Natural killer cell (primary cell): ENCODE measurements at regions of chr11 and their contacts with region 1.

Region 1: GRCh38 chr11:33257897-33258630 is 883 bp downstream of the HIPK3 start:
- DNase-seq: peak; percentile 69 to 87
- ATAC-seq: peak; percentile 56 to 74 (median 58)
- H3K4me3 ChIP-seq: peak overlapping the region; percentile 94
- H3K4me3 Mint-ChIP-seq: peak overlapping the region; percentile 95
- H3K27ac ChIP-seq: peak overlapping the region; percentile 99
- H3K27ac Mint-ChIP-seq: peak overlapping the region; percentile 95
- H3K4me1 ChIP-seq: peaks cover 10% of the 10 kb centered on the region
- H3K4me1 Mint-ChIP-seq: peaks cover 41 to 47% of the 10 kb centered on the region in 2 donors
- H3K27me3 ChIP-seq: no peaks in the 10 kb centered on the region
- H3K27me3 Mint-ChIP-seq: no peaks in the 10 kb centered on the region
- CTCF ChIP-seq: no peak

Region 2: DNA sequence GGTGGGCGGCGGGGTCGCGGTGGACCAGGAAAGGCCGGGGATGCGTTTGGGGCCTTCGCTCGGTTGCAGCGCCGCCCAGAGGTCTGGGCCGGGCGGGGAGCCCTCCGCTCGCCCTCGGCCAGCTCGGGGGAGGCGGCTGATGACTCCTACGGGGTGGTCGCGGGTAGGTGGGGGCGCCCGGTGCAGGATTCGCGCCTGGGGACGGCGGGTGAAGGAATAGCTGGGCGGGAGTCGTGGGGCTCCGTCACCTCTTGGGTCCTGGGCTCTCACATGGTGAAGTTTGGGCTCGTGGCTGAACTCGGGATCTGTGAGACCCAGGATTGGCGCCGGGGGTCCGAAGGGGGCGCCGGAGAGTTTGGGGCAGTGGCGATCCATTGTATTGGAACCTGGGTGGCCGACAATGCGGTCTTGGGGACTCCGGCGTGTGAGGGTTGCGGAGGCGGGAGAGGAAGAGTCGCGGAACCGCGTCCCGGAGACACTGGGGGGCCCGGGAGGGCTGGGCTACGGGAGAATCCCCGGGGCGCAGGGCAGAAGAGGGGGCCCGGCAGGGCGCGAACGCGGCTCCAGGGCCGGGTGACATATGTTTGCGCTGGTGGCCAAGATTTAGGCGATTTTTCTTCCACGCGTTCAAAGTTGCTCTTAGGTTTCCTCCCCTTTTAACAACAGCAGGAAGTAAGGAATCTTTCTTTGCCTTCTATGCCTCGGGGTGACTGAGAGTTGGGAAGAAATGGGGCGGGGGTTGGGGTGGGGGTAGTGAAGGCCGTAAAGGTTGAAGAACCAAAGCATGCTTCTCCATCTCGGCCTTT is 364.5 kb before region 1 on chr11:
- intact Hi-C with region 1: loop called (anchors 10 kb)
- DNase-seq: peak; percentile 57 to 70
- ATAC-seq: peak; percentile 40 to 70 (median 59)
- H3K4me3 ChIP-seq: peak overlapping the region; percentile 74
- H3K4me3 Mint-ChIP-seq: peak overlapping the region; percentile 94
- H3K27ac ChIP-seq: peak overlapping the region; percentile 51
- H3K27ac Mint-ChIP-seq: peak overlapping the region; percentile 59 to 93
- H3K4me1 ChIP-seq: peaks cover 11% of the 10 kb centered on the region
- H3K4me1 Mint-ChIP-seq: peaks cover 31 to 34% of the 10 kb centered on the region in 2 donors
- H3K27me3 ChIP-seq: no peaks in the 10 kb centered on the region
- H3K27me3 Mint-ChIP-seq: no peaks in the 10 kb centered on the region
- CTCF ChIP-seq: peak; percentile 44

Region 3: GRCh38 chr11:33039274-33040032 is 218.6 kb before region 1 on chr11 and contains the start of gene TCP11L1:
- intact Hi-C with region 1: loop called (anchors 2 kb)
- DNase-seq: peak; percentile 78 to 89
- ATAC-seq: peak; percentile 88 to 94 (median 89)
- H3K4me3 ChIP-seq: peak within 1 kb of the TSS; percentile 99
- H3K4me3 Mint-ChIP-seq: peak within 1 kb of the TSS; percentile 96
- H3K27ac ChIP-seq: peak within 1 kb of the TSS; percentile 92
- H3K27ac Mint-ChIP-seq: peak within 1 kb of the TSS; percentile 90 to 93
- H3K4me1 ChIP-seq: peaks cover 12% of the 10 kb centered on the region
- H3K4me1 Mint-ChIP-seq: peaks cover 11% of the 10 kb centered on the region in 2 donors
- H3K27me3 ChIP-seq: no peaks in the 10 kb centered on the region
- H3K27me3 Mint-ChIP-seq: peaks cover 2 to 8% of the 10 kb centered on the region in 2 donors
- CTCF ChIP-seq: no peak
- total RNA-seq, gene TCP11L1: 20.7 to 24.5 (median 22.7) TPM

Region 4: DNA sequence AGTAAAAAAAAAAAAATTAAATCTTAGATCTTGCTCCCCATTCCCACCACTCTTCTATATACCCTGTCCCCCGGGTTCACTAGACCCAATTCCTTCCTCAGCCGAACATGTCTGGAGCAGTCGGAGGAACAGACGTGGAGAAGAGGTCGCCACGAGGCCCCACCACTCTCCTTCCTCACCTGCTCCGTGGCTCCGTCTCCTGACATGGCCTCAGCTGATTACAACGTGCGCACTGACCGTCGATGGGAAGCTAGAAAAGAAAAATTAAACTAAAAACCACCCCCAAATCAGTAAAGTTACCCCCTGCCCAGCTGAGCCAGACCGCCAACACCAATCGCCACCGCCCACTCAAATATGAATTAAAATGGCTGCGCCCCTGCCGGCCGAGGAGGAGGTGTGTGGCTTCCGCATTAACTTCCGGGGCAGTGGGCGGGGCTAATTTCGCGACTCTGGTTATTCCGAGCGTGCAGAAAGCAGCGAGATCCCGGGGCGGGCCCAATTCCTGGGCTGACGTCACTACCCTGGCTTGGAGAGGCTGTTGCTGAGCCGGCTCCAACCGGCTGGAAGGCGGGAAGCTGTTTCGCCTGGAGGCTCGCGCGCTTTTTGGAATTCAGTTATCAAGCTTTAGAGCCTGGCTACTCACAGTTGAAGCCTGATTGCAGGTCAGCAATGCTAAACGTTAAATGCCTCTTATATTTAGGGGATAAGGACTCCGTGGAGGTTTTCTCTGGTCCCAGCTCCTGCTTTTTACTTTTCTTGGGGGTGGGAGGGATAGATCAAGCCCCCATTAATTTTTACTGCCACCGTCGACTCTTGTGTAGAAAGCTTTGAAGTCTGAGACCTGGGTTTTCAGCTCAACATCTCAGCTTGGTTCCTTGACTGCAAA is 96.7 kb before region 1 on chr11 and contains the start of gene CSTF3:
- intact Hi-C with region 1: loop called (anchors 2 kb)
- DNase-seq: peak; percentile 92 to 96
- ATAC-seq: peak; percentile 96 to 98 (median 96)
- H3K4me3 ChIP-seq: peak within 1 kb of the TSS; percentile 99
- H3K4me3 Mint-ChIP-seq: peak within 1 kb of the TSS; percentile 100
- H3K27ac ChIP-seq: peak within 1 kb of the TSS; percentile 79
- H3K27ac Mint-ChIP-seq: peak within 1 kb of the TSS; percentile 98 to 100
- H3K4me1 ChIP-seq: peaks cover 15% of the 10 kb centered on the region
- H3K4me1 Mint-ChIP-seq: peaks cover 46 to 55% of the 10 kb centered on the region in 2 donors
- H3K27me3 ChIP-seq: no peaks in the 10 kb centered on the region
- H3K27me3 Mint-ChIP-seq: no peaks in the 10 kb centered on the region
- CTCF ChIP-seq: peak; percentile 40
- total RNA-seq, gene CSTF3: 10.9 to 15.6 (median 12.0) TPM

Region 5: DNA sequence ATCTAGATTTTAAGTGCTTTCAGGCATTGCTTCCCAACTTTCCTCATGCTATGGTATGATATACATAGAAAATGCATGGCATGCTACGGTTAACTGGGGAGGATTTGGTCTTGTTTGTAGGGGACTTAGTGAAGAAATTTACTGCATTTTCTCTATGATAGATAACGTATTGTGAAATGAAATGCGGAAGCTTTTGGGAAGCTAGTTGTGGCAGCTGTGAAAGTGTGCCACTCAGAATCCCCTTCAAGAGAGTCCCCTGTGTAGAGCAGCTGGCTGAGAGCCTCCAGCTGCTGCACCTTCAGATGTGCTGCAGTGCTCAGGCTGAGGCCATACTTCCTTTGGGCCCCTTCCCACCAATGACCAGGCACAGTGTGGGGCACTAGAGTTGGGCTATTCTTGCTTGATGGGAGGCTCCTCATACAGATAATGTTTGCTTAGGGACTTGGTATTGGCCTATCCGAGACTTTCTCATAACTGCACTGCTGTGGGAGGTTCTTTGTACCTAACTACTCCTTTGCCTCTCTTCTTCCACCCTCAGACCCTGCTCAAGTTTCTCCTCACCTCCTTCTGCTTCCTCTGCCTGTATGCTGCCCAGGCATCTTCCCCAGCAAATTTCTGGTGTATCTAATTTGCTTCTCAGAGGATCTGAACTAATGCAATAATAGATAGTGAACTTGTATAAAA is 66.4 kb after region 1 on chr11:
- intact Hi-C with region 1: loop called (anchors 5 kb)
- DNase-seq: no peak
- ATAC-seq: peak in 1 of 3 donors; percentile 54
- H3K4me3 ChIP-seq: no peak overlapping the region
- H3K4me3 Mint-ChIP-seq: no peak overlapping the region
- H3K27ac ChIP-seq: no peak overlapping the region
- H3K27ac Mint-ChIP-seq: peak overlapping the region; percentile 20 to 29
- H3K4me1 ChIP-seq: peaks cover 14% of the 10 kb centered on the region
- H3K4me1 Mint-ChIP-seq: peaks cover 33 to 44% of the 10 kb centered on the region in 2 donors
- H3K27me3 ChIP-seq: no peaks in the 10 kb centered on the region
- H3K27me3 Mint-ChIP-seq: no peaks in the 10 kb centered on the region
- CTCF ChIP-seq: no peak

Region 6: DNA sequence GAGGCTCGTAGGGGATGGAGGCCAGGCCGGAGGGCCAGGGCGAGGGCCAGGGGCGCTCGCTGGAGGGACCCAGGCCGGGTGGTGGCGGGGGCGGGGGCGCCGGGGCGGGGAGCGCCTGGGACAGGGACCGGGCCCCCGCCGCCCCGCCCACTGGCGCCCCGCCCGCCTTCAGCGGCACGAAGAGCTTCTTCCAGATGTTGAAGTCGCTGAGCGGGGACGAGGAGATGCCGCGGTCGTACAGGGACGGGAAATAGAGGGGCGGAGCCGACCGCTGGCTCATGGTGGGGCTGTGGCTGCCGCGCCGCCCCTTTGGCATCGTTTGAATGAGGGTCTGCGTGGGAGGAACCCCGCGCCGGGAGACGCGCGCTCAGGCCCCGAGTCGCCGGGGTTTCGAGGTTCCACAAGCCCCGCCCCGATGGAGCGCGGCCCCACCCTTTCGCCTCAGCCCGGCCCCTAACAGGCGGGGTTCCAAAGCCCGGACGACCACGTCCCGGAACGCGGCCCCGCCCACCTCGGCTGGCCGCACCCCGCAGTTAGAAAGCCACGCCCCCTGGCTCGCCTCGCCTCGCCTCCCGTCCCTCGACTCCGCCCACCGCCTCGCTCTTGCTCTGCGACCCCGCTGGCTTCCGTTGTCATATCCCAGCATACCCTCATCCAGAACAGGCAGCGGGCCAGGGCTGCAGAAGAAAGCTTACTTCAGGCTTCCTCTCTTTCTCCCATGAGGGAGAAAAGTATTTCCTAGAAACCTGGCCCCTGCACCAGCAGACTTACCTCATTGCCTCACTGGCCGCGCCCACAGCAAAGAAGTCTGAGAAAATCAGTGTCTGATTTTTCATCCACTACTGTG is 442.6 kb after region 1 on chr11 and contains the start of gene C11orf91:
- intact Hi-C with region 1: loop called (anchors 2 kb)
- DNase-seq: peak; percentile 95 to 97
- ATAC-seq: peak; percentile 96 to 98 (median 97)
- H3K4me3 ChIP-seq: peak within 1 kb of the TSS; percentile 69
- H3K4me3 Mint-ChIP-seq: peak within 1 kb of the TSS; percentile 89
- H3K27ac ChIP-seq: no peak within 1 kb of the TSS
- H3K27ac Mint-ChIP-seq: peak within 1 kb of the TSS; percentile 74 to 80
- H3K4me1 ChIP-seq: peaks cover 12% of the 10 kb centered on the region
- H3K4me1 Mint-ChIP-seq: peaks cover 16% of the 10 kb centered on the region in 2 donors
- H3K27me3 ChIP-seq: no peaks in the 10 kb centered on the region
- H3K27me3 Mint-ChIP-seq: peaks cover 24 to 25% of the 10 kb centered on the region in 2 donors
- CTCF ChIP-seq: no peak
- total RNA-seq, gene C11orf91: not detected